Right lobe of liver (tissue), 6 donors: ENCODE measurements at regions of chr11 and their contacts with region 1.

Region 1: GRCh38 chr11:76318744-76319384 is 62.1 kb downstream of the THAP12 start:
- DNase-seq: peak; percentile 86 to 88 (median 87)
- ATAC-seq: peak; percentile 90 to 99 (median 94)
- H3K4me3 ChIP-seq: no peak overlapping the region
- H3K27ac ChIP-seq: no peak overlapping the region
- H3K4me1 ChIP-seq: peaks cover 0 to 8% (median 0%) of the 10 kb centered on the region in 4 donors
- H3K27me3 ChIP-seq: no peaks in the 10 kb centered on the region
- CTCF ChIP-seq: peak; percentile 84 to 94 (median 90)
- POLR2A ChIP-seq: no peak

Region 2: GRCh38 chr11:76207642-76208401 is 111.0 kb before region 1 on chr11:
- intact Hi-C with region 1: loop called (anchors 5 kb)
- DNase-seq: peak; percentile 78 to 83 (median 79)
- ATAC-seq: peak; percentile 73 to 80 (median 76)
- H3K4me3 ChIP-seq: peak overlapping the region; percentile 52 to 66 (median 61)
- H3K27ac ChIP-seq: peak overlapping the region in 1 of 3 donors; percentile 90
- H3K4me1 ChIP-seq: peaks cover 0 to 34% (median 10%) of the 10 kb centered on the region in 4 donors
- H3K27me3 ChIP-seq: no peaks in the 10 kb centered on the region
- CTCF ChIP-seq: peak; percentile 96 to 99 (median 98)
- POLR2A ChIP-seq: no peak

Region 3: DNA sequence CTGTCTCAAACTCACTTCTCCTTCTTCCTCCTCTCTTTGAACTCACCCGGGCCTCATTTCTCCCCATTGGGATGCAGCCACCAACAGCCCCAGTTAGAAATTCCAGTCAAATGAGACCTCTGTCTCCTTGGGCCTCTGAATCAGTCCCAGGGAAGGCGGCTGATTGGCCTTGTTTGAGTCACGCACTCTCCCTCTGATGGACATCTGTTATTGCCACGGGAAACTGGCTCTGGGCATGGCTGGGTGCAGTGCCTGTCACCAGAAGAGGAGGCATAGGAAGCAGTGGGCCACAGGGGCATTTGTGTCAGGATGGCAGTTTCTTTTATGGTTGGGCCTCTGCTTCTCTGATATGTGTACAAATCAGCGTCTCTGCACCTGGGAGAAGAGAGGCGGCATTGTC is 102.9 kb before region 1 on chr11:
- intact Hi-C with region 1: loop called in 1 of 2 experiments (anchors 5 kb)
- DNase-seq: peak in 1 of 3 donors; percentile 12
- ATAC-seq: no peak
- H3K4me3 ChIP-seq: no peak overlapping the region
- H3K27ac ChIP-seq: no peak overlapping the region
- H3K4me1 ChIP-seq: no peaks in the 10 kb centered on the region
- H3K27me3 ChIP-seq: no peaks in the 10 kb centered on the region
- CTCF ChIP-seq: no peak
- POLR2A ChIP-seq: no peak